ENCODE measurements at regions of chr17 and their contacts with region 1.

Region 1: DNA sequence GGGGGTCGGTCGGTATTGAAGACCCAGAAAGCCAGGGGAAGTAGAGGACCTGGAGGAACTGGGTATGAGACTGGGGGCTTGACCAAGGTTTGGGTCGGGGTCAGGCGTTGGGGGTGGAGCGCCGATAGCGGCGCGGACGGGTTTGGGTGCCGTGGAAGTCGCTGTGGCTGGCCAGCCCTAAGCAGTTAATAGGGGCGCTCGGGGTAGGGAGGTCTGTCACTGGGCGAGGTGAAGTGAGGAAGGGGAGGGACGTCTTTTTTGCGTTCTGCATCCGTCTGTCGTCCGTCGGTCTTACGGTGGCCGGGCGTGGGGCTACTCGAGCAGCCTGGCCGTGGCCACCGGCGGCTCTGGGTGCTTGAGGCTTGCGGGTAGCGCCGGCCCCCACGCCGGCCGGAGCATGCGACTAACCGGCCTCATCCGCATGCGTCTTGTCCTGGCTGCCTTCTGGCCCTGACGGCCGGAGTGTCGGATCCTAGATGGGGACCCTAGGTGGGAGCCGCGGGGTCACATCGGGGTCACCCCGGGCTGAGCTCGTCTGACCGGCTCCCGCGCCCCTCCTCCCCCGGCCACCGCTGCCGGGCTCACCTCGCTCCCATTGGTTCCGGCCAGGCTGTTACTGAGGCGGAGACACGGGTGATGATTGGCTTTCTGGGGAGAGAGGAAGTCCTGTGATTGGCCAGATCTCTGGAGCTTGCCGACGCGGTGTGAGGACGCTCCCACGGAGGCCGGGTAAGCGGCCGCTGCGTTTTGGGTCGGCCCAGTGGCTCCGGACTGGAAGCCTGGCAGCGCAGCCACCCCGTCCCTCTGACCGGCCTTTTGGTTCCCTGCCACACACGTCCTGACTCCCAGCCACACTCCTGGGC is 10.3 kb upstream of the TMEM88 start:
- DNase-seq: peak; percentile 92
- ATAC-seq: peak; percentile 51
- H3K4me3 Mint-ChIP-seq: peak overlapping the region; percentile 97
- H3K27ac Mint-ChIP-seq: peak overlapping the region; percentile 96
- H3K4me1 Mint-ChIP-seq: peaks cover 40% of the 10 kb centered on the region
- H3K27me3 Mint-ChIP-seq: no peaks in the 10 kb centered on the region

Region 2: DNA sequence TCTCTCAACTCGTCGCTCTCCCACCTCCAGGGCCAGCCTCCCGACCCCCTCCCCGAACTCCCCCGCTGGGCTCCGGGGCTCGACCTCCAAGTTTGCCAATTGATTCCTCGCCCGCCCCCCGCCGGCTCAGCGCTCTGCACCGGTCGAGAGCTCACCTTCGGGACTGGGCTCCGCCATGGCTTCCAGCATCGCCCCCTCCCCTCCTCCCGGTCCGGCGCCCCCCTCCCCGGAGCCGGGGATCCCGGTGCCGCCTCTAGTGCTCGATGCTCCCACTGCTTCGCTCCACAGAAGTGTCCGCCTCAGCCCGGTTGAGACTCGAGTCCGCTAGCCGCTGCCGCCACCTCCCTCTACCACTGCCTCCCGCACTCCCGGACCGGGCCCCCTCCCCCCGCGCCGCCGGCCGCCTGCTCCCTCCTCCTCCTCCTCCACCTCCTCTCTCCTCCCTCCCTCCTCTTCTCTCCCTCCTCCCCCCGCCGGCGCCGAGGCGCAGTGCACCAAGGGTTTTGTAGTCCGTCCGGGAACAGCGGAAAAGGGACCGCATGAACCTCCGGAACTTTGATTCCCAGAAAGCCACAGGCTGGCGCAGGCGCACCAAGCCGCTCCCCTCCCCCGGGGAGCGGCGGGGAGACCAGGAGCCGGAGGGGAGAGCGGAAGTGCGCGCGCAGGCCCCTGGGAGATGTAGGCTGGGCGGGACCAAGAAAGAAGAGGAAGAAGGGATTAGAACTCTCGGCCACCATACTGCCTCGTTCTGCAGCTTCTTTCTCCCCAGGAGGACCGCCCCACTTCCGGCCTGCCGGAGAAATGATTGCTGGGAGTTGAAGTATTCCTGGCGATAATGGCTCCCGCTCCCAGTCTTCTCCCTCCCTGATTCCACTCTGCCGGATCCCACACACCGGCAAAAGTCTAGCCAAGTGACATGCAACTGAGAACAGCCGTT is 605.2 kb before region 1 on chr17 and contains the start of gene PHF23:
- CTCF ChIA-PET with region 1: no interaction called
- POLR2A ChIA-PET with region 1: interaction called, 3 read pairs
- intact Hi-C with region 1: loop called in 1 of 2 experiments (anchors 5 kb)
- DNase-seq: peak; percentile 99
- ATAC-seq: peak; percentile 74
- H3K4me3 Mint-ChIP-seq: peak within 1 kb of the TSS; percentile 97
- H3K27ac Mint-ChIP-seq: peak within 1 kb of the TSS; percentile 93
- H3K4me1 Mint-ChIP-seq: peaks cover 61% of the 10 kb centered on the region
- H3K27me3 Mint-ChIP-seq: no peaks in the 10 kb centered on the region
- total RNA-seq, gene PHF23: 23.6 to 35.2 TPM

Region 3: GRCh38 chr17:7329374-7329996 is 515.0 kb before region 1 on chr17:
- CTCF ChIA-PET with region 1: interaction called, 3 read pairs
- POLR2A ChIA-PET with region 1: no interaction called
- intact Hi-C with region 1: loop called in 1 of 2 experiments (anchors 5 kb)
- DNase-seq: peak; percentile 98
- ATAC-seq: peak; percentile 69
- H3K4me3 Mint-ChIP-seq: peak overlapping the region; percentile 89
- H3K27ac Mint-ChIP-seq: peak overlapping the region; percentile 96
- H3K4me1 Mint-ChIP-seq: peaks cover 44% of the 10 kb centered on the region
- H3K27me3 Mint-ChIP-seq: no peaks in the 10 kb centered on the region

Region 4: GRCh38 chr17:7572588-7573323 is 271.8 kb before region 1 on chr17:
- CTCF ChIA-PET with region 1: no interaction called
- POLR2A ChIA-PET with region 1: interaction called, 3 read pairs
- intact Hi-C with region 1: loop called in 1 of 2 experiments (anchors 2 kb)
- DNase-seq: peak; percentile 100
- ATAC-seq: peak; percentile 92
- H3K4me3 Mint-ChIP-seq: peak overlapping the region; percentile 94
- H3K27ac Mint-ChIP-seq: peak overlapping the region; percentile 99
- H3K4me1 Mint-ChIP-seq: peaks cover 51% of the 10 kb centered on the region
- H3K27me3 Mint-ChIP-seq: no peaks in the 10 kb centered on the region

Region 5: DNA sequence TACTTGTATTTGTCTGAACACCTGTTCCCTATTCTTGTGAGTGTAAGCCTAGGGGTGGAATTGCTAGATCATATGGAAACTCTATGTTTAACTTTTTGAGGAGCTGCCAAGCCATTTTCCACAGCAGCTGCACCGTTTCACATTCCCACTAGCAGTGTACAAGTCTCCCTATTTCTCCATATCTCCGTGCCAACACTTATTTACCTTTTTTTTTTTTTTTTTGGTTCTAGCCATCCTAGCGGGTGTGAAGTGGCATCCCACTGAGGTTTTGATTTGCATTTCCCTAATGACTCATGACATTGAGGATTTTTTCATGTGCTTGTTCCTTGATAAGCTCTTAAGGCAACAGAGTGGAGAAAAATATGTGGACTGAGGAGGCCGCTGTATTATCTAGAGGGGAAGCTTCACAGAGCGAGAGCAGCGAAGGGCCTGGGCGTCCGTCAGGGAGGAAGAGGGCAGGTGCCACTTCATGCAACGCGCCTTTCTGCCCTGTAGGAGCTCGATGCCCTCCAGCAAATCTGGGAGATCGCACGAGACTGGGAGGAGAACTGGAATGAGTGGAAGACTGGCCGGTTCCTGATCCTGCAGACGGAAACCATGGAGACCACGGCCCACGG is 77.0 kb before region 1 on chr17:
- CTCF ChIA-PET with region 1: no interaction called
- POLR2A ChIA-PET with region 1: no interaction called
- intact Hi-C with region 1: no loop called
- DNase-seq: no peak
- ATAC-seq: no peak
- H3K4me3 Mint-ChIP-seq: no peak overlapping the region
- H3K27ac Mint-ChIP-seq: no peak overlapping the region
- H3K4me1 Mint-ChIP-seq: no peaks in the 10 kb centered on the region
- H3K27me3 Mint-ChIP-seq: peaks cover 7% of the 10 kb centered on the region

Region 6: DNA sequence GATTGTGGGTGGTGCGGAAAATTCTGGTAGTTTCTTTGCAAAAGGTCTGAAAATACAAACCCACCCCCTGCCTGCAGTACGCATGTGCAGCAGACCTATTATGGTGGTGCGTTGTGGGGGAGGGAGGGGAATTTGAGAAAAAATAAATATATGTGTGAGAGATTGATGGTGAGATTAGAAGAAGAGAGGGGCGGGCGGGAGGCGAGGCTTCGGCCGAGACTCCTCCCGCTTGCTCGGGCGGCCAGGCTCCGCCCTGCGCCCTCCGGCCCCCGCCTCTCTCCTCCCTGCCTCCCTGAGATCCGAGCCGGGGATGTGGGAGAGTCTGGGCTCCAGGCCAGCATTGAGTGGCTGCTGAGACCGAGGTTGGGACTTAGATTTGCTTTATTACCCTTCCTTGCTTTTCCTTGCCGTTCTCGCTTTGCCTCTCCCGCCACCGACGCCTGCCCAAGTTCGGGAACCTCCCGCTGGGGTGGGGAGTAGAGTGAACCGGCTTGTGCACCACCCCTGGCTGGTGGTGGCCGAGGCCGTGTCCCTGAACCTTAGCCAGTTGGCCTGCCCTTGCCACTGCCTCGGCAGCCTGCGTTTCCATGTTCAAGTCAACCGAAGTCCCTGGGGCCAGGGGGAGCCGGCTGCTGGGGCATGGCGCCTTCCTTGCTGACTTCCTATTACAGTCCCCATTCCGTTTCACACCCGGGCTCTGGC is 43.1 kb after region 1 on chr17:
- CTCF ChIA-PET with region 1: interaction called, 3 read pairs
- POLR2A ChIA-PET with region 1: no interaction called
- intact Hi-C with region 1: loop called (anchors 1 kb)
- DNase-seq: peak; percentile 94
- ATAC-seq: peak; percentile 79
- H3K4me3 Mint-ChIP-seq: no peak overlapping the region
- H3K27ac Mint-ChIP-seq: no peak overlapping the region
- H3K4me1 Mint-ChIP-seq: peaks cover 4% of the 10 kb centered on the region
- H3K27me3 Mint-ChIP-seq: no peaks in the 10 kb centered on the region

Region 7: DNA sequence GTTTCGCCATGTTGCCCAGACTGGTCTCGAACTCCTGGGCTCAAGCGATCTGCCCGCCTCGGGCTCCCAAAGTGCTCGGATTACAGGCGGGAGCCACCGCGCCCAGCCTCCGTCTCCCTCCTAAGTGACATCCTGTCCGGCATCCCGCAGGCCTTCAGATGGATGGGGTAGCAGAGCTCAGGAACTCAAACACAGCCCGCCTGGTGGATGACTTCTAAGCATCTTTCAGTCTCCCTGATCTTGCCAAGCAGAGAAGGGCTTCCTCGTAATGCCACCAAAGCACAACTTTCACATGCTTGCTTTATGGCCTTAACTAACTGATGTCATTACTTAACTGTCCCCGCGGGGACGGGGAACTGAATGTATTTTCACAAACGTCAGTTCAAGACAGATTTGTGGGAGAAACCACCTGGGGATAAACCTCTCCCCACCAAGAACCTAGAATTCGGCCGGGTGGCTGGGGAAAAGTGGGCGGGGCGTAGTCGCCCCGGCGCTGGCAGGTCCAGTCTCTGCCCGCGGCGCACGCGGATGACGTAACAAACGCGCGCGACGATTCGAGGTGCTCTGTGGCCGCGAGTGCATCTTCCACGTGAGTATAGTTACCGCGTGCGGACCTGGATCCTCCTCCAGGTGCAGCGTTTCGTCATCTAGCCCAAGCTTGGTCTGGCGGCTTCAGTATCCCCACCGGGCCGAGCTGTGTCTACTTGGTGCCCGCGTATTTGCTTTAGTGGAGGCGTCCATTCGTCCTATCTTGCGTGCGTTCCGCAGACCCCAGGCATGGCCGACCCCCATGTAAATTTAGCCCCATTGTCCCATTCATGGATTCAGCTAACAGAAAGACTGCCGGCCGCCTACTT is 404.5 kb after region 1 on chr17 and contains the start of gene PFAS:
- CTCF ChIA-PET with region 1: no interaction called
- POLR2A ChIA-PET with region 1: no interaction called
- intact Hi-C with region 1: loop called in 1 of 2 experiments (anchors 1 kb)
- DNase-seq: peak; percentile 98
- ATAC-seq: peak; percentile 57
- H3K4me3 Mint-ChIP-seq: peak within 1 kb of the TSS; percentile 94
- H3K27ac Mint-ChIP-seq: peak within 1 kb of the TSS; percentile 98
- H3K4me1 Mint-ChIP-seq: peaks cover 36% of the 10 kb centered on the region
- H3K27me3 Mint-ChIP-seq: no peaks in the 10 kb centered on the region
- total RNA-seq, gene PFAS: 113 to 141 TPM

Measured in activated CD4-positive, alpha-beta T cell treated with anti-CD3 and anti-CD28 coated beads for 36 hours (primary cell).